B cell (primary cell): ENCODE measurements at regions of chr16 and their contacts with region 1.

Region 1: GRCh38 chr16:81641395-81642106 is 137.5 kb upstream of the PLCG2 start:
- DNase-seq: no peak
- ATAC-seq: no peak
- H3K4me3 ChIP-seq: no peak overlapping the region
- H3K4me3 Mint-ChIP-seq: no peak overlapping the region
- H3K27ac ChIP-seq: no peak overlapping the region
- H3K27ac Mint-ChIP-seq: no peak overlapping the region
- H3K4me1 ChIP-seq: no peaks in the 10 kb centered on the region
- H3K4me1 Mint-ChIP-seq: peaks cover 10% of the 10 kb centered on the region
- H3K27me3 ChIP-seq: no peaks in the 10 kb centered on the region
- H3K27me3 Mint-ChIP-seq: no peaks in the 10 kb centered on the region
- CTCF ChIP-seq: no peak

Region 2: GRCh38 chr16:81629034-81629802 is 12.3 kb before region 1 on chr16:
- CTCF ChIA-PET with region 1: interaction called, 5 read pairs
- POLR2A ChIA-PET with region 1: interaction called, 11 read pairs
- intact Hi-C with region 1: no loop called
- DNase-seq: no peak
- ATAC-seq: no peak
- H3K4me3 ChIP-seq: no peak overlapping the region
- H3K4me3 Mint-ChIP-seq: no peak overlapping the region
- H3K27ac ChIP-seq: no peak overlapping the region
- H3K27ac Mint-ChIP-seq: no peak overlapping the region
- H3K4me1 ChIP-seq: peaks cover 5 to 11% of the 10 kb centered on the region in 2 donors
- H3K4me1 Mint-ChIP-seq: peaks cover 31% of the 10 kb centered on the region
- H3K27me3 ChIP-seq: no peaks in the 10 kb centered on the region
- H3K27me3 Mint-ChIP-seq: no peaks in the 10 kb centered on the region
- CTCF ChIP-seq: no peak